AG04449 (cell line): ENCODE measurements at regions of chr11 and their contacts with region 1.

Region 1: GRCh38 chr11:107565219-107565937 is at the start of gene ALKBH8:
- DNase-seq: no peak
- H3K4me3 ChIP-seq: peak within 1 kb of the TSS; percentile 72
- CTCF ChIP-seq: no peak

Region 2: DNA sequence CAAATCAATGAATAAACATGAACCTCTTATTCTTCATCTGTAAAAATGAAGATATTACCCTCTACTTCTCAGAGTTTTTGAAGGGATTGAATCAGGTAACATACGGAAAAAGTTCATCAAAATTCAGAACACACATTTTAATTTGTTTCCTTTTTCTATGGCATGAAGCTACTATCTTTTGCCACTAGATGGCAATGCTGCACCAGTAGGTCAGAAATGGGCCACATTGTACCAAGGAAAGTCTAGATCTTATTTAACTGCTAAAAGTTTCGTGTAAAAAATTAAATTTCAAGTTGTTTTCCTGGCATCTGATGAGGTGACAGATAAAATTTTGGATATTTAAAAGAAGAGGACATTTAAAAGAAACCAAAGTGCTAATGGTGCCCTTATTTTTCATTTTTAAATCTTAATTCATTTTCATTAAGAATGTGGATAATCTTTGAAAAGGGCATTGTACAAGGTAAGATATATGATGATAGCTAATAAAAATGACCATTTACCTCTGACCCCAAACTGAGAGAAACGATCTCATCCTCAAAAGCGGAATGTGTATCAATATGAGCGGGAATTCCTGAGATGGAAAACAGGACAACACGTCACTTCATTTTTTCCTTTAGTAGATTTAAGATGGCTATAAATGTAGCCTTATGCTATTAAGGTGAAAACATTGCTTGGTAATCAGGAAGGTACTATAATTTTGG is 16.0 kb before region 1 on chr11:
- CTCF ChIA-PET with region 1: interaction called, 110 read pairs
- POLR2A ChIA-PET with region 1: no interaction called
- DNase-seq: no peak
- H3K4me3 ChIP-seq: no peak overlapping the region
- CTCF ChIP-seq: peak; percentile 70

Region 3: DNA sequence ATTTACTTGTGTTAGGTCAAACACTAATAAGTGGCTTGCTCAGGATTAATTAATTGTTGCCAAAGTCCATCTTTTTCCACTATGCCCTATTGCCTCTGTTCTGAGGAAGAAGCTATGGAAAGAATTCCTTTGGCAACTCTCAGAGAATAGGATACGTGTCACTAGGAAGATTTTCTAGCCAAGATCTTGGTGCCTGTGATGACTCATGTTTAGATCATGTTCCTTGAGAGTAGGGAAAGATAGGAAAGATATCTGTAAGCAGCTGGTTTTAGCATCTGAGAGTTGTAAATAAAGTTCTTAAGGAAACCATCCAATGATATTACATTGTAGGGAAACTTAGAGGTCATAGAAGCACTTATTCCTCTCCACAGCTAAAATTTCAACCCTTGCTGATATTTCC is 130.8 kb after region 1 on chr11:
- CTCF ChIA-PET with region 1: interaction called, 485 read pairs
- POLR2A ChIA-PET with region 1: no interaction called
- DNase-seq: peak; percentile 82
- H3K4me3 ChIP-seq: no peak overlapping the region
- CTCF ChIP-seq: no peak

Region 4: GRCh38 chr11:107898270-107898669 is 332.9 kb after region 1 on chr11:
- CTCF ChIA-PET with region 1: interaction called, 34 read pairs
- POLR2A ChIA-PET with region 1: no interaction called
- DNase-seq: no peak
- H3K4me3 ChIP-seq: no peak overlapping the region
- CTCF ChIP-seq: peak; percentile 48